B cell (primary cell): ENCODE measurements at regions of chr19 and their contacts with region 1.

Region 1: GRCh38 chr19:18167975-18168645 is 5.5 kb upstream of the IFI30 start:
- DNase-seq: peak; percentile 79
- ATAC-seq: peak; percentile 28
- H3K4me3 ChIP-seq: peak overlapping the region in 4 of 5 experiments; percentile 21 to 47 (median 33)
- H3K4me3 Mint-ChIP-seq: peak overlapping the region; percentile 87
- H3K27ac ChIP-seq: peak overlapping the region; percentile 97 to 99
- H3K27ac Mint-ChIP-seq: peak overlapping the region; percentile 98
- H3K4me1 ChIP-seq: peaks cover 50 to 58% of the 10 kb centered on the region in 2 donors
- H3K4me1 Mint-ChIP-seq: peaks cover 52% of the 10 kb centered on the region
- H3K27me3 ChIP-seq: no peaks in the 10 kb centered on the region
- H3K27me3 Mint-ChIP-seq: no peaks in the 10 kb centered on the region
- CTCF ChIP-seq: peak; percentile 80

Region 2: DNA sequence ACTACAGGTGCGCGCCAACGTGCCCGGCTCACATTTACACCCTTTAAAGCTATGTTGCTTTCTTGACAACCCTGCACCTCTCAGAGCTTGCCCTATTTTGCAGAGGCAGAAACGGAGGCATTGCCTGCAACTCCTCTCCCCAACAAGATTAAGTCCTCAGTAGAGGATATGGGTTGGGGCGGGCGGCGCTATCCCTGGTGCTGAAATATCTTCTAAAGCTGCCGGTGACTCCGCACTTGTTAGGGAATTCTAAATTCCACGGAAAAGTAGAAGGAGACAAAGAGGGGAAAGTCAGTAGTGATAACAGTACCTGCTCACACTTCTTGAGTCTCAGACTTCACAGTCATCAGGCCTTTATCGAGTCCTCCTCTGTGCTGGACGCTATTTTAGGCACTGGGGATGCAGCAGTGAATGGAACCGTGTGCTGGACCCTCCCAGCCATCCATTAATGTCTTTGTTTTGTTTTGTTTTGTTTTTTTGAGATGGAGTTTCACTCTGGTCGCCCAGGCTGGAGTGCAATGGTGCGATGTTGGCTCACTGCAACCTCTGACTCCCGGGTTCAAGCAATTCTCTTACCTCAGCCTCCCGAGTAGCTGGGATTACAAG is 278.4 kb before region 1 on chr19:
- CTCF ChIA-PET with region 1: no interaction called
- POLR2A ChIA-PET with region 1: no interaction called
- intact Hi-C with region 1: no loop called
- DNase-seq: no peak
- ATAC-seq: no peak
- H3K4me3 ChIP-seq: no peak overlapping the region
- H3K4me3 Mint-ChIP-seq: no peak overlapping the region
- H3K27ac ChIP-seq: no peak overlapping the region
- H3K27ac Mint-ChIP-seq: peak overlapping the region; percentile 10
- H3K4me1 ChIP-seq: peaks cover 22% of the 10 kb centered on the region in 2 donors
- H3K4me1 Mint-ChIP-seq: peaks cover 15% of the 10 kb centered on the region
- H3K27me3 ChIP-seq: no peaks in the 10 kb centered on the region
- H3K27me3 Mint-ChIP-seq: peaks cover 4% of the 10 kb centered on the region
- CTCF ChIP-seq: no peak

Region 3: DNA sequence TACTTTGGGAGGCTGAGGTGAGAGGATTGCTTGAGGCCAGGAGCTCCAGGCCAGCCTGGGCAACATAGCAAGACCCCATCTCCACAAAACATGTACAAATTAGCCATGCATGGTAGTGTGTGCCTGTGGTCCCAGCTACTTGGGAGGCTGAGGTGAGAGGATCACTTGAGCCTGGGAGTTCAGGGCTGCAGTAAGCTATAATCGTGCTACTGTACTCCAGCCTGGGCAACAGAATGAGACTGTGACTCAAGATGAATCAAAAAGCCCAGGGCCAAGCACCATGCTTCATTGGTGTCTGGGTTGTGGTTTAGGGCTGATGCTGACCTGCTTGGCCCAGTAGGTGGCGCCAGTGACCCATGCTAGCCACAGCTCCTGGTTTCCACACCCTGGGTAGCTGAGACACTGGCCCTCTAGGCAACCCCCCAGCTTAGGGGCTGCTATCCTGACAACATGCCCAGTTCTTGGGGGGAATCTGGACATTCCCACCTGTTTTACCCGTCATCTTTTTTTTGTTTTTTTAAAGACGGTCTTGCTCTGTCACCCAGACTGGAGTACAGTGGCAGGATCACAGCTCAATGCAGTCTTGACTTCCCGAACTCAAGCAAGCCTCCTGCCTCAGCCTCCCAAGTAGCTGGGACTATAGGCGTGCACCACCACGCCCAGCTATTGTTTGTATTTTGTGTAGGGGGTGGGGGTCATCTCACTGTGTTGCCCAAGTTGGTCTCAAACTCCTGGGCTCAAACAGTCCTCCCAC is 229.8 kb before region 1 on chr19:
- CTCF ChIA-PET with region 1: interaction called, 6 read pairs
- POLR2A ChIA-PET with region 1: interaction called, 4 read pairs
- intact Hi-C with region 1: loop called (anchors 1 kb)
- DNase-seq: peak; percentile 88
- ATAC-seq: peak; percentile 98
- H3K4me3 ChIP-seq: no peak overlapping the region
- H3K4me3 Mint-ChIP-seq: no peak overlapping the region
- H3K27ac ChIP-seq: no peak overlapping the region
- H3K27ac Mint-ChIP-seq: peak overlapping the region; percentile 41
- H3K4me1 ChIP-seq: peaks cover 5 to 10% of the 10 kb centered on the region in 2 donors
- H3K4me1 Mint-ChIP-seq: peaks cover 11% of the 10 kb centered on the region
- H3K27me3 ChIP-seq: no peaks in the 10 kb centered on the region
- H3K27me3 Mint-ChIP-seq: no peaks in the 10 kb centered on the region
- CTCF ChIP-seq: peak; percentile 94

Region 4: DNA sequence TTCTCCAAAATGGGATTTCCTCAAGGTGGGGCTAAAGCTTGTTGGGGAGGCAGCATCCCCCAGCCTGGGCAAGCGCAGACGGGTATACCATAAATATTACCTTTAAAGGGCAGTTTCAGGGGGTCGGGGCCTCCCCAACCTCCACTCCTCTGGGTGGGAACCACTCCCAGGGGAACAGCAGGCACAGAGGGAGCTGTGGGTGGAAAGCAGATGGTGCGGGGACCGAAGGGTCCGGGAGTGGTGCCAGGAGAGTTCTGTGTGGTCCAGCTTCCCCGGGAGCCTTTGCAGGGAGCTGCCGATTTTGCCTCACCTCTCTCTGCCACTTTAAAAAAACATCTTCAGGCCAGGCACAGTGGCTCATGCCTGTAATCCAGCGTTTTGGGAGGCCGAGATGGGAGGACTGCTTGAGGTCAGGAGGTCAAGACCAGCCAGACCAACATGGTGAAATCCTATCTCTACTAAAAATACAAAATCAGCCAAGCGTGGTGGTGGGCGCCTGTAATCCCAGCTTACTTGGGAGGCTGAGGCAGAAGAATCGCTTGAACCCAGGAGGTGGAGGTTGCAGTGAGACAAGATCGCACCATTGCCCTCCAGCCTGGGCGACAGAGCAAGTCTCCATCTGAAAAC is 65.1 kb before region 1 on chr19:
- CTCF ChIA-PET with region 1: interaction called, 9 read pairs
- POLR2A ChIA-PET with region 1: interaction called, 13 read pairs
- intact Hi-C with region 1: loop called (anchors 5 kb)
- DNase-seq: no peak
- ATAC-seq: no peak
- H3K4me3 ChIP-seq: no peak overlapping the region
- H3K4me3 Mint-ChIP-seq: peak overlapping the region; percentile 60
- H3K27ac ChIP-seq: peak overlapping the region in 1 of 2 donors; percentile 71
- H3K27ac Mint-ChIP-seq: peak overlapping the region; percentile 29
- H3K4me1 ChIP-seq: peaks cover 46 to 78% of the 10 kb centered on the region in 2 donors
- H3K4me1 Mint-ChIP-seq: peaks cover 67% of the 10 kb centered on the region
- H3K27me3 ChIP-seq: no peaks in the 10 kb centered on the region
- H3K27me3 Mint-ChIP-seq: no peaks in the 10 kb centered on the region
- CTCF ChIP-seq: no peak

Region 5: DNA sequence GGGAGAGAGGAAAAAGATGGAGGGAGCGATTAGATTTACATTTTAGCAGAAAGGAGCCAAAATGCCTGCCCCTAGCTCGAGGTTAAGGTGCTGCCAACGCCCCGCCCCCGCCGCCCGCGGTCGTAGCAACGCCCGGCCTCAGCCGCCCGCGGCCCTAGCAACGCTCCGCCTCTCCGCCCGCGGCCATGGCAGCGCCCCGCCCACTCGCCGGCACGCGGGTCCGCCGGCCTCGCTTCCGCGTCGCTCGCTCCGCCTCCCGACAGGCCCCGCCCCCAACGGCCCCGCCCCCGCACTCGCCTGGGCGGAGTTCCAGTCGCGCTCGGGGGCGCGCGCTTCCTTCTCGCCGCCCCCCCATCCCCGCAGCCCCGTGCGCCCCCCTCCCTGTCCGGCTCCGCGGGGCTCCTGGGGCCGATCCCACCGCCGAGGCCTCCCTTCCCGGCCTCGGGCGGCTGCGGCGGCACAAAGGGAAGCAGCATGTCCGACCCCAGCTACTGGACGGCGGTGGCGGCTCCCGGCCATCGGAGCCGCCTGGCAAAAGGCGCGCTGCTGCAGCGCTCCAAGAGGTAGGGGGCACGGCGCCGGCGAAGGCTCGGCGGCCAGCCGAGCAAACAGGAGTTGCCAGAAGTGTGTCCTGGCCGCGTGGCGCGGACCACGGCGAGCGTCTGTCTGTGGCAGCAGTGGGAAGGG is 50.3 kb before region 1 on chr19:
- CTCF ChIA-PET with region 1: interaction called, 5 read pairs
- POLR2A ChIA-PET with region 1: interaction called, 7 read pairs
- intact Hi-C with region 1: loop called (anchors 2 kb)
- DNase-seq: peak; percentile 96
- ATAC-seq: peak; percentile 94
- H3K4me3 ChIP-seq: peak overlapping the region in 4 of 5 experiments; percentile 64 to 71 (median 66)
- H3K4me3 Mint-ChIP-seq: peak overlapping the region; percentile 86
- H3K27ac ChIP-seq: peak overlapping the region; percentile 47 to 76
- H3K27ac Mint-ChIP-seq: peak overlapping the region; percentile 85
- H3K4me1 ChIP-seq: peaks cover 30 to 36% of the 10 kb centered on the region in 2 donors
- H3K4me1 Mint-ChIP-seq: peaks cover 52% of the 10 kb centered on the region
- H3K27me3 ChIP-seq: no peaks in the 10 kb centered on the region
- H3K27me3 Mint-ChIP-seq: no peaks in the 10 kb centered on the region
- CTCF ChIP-seq: no peak

Region 6: GRCh38 chr19:18152444-18152816 is 15.7 kb before region 1 on chr19:
- CTCF ChIA-PET with region 1: interaction called, 8 read pairs
- POLR2A ChIA-PET with region 1: interaction called, 17 read pairs
- intact Hi-C with region 1: loop called (anchors 2 kb)
- DNase-seq: peak; percentile 100
- ATAC-seq: peak; percentile 71
- H3K4me3 ChIP-seq: peak overlapping the region; percentile 63 to 88 (median 70)
- H3K4me3 Mint-ChIP-seq: peak overlapping the region; percentile 89
- H3K27ac ChIP-seq: peak overlapping the region; percentile 90 to 93
- H3K27ac Mint-ChIP-seq: peak overlapping the region; percentile 95
- H3K4me1 ChIP-seq: peaks cover 14 to 25% of the 10 kb centered on the region in 2 donors
- H3K4me1 Mint-ChIP-seq: peaks cover 23% of the 10 kb centered on the region
- H3K27me3 ChIP-seq: no peaks in the 10 kb centered on the region
- H3K27me3 Mint-ChIP-seq: no peaks in the 10 kb centered on the region
- CTCF ChIP-seq: peak; percentile 88

Region 7: DNA sequence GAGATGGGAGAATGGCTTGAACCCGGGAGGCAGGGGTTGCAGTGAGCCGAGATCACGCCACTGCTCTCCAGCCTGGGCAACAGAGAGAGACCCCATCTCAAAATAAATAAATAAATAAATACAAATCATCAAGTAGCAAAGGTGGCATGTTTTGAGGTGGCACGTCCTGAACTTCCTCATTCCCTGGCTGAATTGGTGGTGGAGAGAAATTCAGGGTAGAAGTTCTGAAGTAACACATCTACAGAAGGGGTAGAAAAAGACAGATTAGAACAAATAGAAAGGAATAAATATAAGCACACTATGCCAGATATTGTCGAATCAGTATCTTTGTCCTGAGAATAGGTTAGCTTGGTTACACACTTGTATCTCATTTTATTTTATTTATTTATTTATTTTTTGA is 11.8 kb after region 1 on chr19:
- CTCF ChIA-PET with region 1: interaction called, 21 read pairs
- POLR2A ChIA-PET with region 1: interaction called, 14 read pairs
- intact Hi-C with region 1: loop called (anchors 1 kb)
- DNase-seq: peak; percentile 55
- ATAC-seq: no peak
- H3K4me3 ChIP-seq: no peak overlapping the region
- H3K4me3 Mint-ChIP-seq: peak overlapping the region; percentile 75
- H3K27ac ChIP-seq: peak overlapping the region in 1 of 2 donors; percentile 21
- H3K27ac Mint-ChIP-seq: peak overlapping the region; percentile 90
- H3K4me1 ChIP-seq: peaks cover 52 to 62% of the 10 kb centered on the region in 2 donors
- H3K4me1 Mint-ChIP-seq: peaks cover 54% of the 10 kb centered on the region
- H3K27me3 ChIP-seq: no peaks in the 10 kb centered on the region
- H3K27me3 Mint-ChIP-seq: no peaks in the 10 kb centered on the region
- CTCF ChIP-seq: no peak

Region 8: DNA sequence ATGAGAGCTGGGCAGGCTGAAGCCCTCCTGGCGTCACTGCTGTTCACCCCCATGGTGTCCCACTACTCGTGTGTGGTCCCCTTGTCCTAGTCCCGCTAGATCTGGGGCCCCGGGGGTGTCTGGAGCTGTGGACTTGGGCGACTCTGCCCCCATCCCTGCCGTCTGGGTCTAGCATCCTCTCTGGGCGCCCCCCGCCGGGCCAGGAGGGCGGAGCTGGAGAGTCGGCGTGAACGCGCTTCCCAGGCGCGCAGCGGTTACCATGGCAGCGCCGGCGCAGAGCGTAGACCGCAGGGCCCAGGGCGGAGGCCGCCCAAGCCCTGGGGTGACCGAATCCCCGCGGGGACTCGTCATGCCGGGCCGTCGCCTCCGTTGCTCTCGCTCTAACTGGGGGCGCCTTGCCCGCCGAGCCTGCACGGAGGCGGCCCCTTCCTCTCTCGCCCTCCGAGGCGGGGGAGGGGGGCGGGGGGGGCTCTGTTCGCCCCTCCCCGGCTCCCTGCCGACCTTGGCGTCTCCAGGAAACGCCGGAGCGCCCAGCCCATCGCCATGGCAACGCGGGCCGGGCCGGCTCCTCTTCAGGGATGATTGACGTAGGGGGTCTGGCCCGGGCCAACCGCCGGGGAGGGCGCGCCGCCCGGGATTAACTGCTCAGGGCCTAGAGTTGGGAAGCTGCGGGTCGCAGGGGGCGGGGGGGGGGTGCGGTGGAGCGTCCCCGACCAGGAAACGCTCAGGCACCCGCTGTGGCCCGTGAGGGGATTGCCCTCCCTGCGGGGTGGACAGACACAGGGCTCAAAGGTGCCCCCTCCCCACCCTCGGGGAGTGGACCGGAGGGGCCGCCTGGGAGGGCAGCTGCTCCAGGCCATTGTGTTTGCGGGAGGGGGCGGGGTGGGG is 260.9 kb after region 1 on chr19:
- CTCF ChIA-PET with region 1: no interaction called
- POLR2A ChIA-PET with region 1: interaction called, 12 read pairs
- intact Hi-C with region 1: no loop called
- DNase-seq: peak; percentile 96
- ATAC-seq: peak; percentile 81
- H3K4me3 ChIP-seq: peak overlapping the region in 4 of 5 experiments; percentile 54 to 61 (median 58)
- H3K4me3 Mint-ChIP-seq: peak overlapping the region; percentile 78
- H3K27ac ChIP-seq: peak overlapping the region; percentile 85 to 89
- H3K27ac Mint-ChIP-seq: peak overlapping the region; percentile 86
- H3K4me1 ChIP-seq: peaks cover 24 to 39% of the 10 kb centered on the region in 2 donors
- H3K4me1 Mint-ChIP-seq: peaks cover 21% of the 10 kb centered on the region
- H3K27me3 ChIP-seq: no peaks in the 10 kb centered on the region
- H3K27me3 Mint-ChIP-seq: no peaks in the 10 kb centered on the region
- CTCF ChIP-seq: no peak